B cell (primary cell): ENCODE measurements at regions of chr7 and their contacts with region 1.

Region 1: DNA sequence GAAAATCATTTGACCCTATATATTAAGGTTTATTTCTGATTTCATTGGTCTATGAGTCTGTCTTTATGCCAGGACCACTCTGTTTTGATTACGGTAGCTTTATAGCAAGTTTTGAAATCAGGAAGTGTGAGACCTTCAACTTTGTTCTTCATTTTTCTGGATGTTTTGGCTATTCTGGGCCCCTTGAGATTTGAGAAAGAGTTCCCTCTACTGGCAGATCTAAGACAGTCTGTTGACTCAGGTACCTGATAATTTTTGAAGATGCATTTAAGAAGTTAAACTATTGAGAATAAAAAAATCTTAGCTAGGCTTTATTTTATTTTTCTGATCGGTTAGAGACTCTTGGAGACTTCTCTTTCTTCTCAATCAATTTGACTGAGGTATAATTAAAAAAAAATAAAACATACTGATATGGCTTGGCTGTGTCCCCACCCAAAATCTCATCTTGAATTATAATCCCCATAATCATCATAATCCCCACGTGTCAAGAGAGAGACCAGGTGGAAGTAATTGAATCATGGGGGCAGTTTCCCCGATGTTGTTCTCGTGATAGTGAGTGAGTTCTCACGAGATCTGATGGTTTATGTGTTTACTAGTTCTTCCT is 209.2 kb downstream of the SNX10 start:
- DNase-seq: peak; percentile 70
- ATAC-seq: peak; percentile 70
- H3K4me3 ChIP-seq: no peak overlapping the region
- H3K4me3 Mint-ChIP-seq: no peak overlapping the region
- H3K27ac ChIP-seq: no peak overlapping the region
- H3K27ac Mint-ChIP-seq: no peak overlapping the region
- H3K4me1 ChIP-seq: no peaks in the 10 kb centered on the region
- H3K4me1 Mint-ChIP-seq: no peaks in the 10 kb centered on the region
- H3K27me3 ChIP-seq: peaks cover 0 to 6% (median 3%) of the 10 kb centered on the region in 4 experiments
- H3K27me3 Mint-ChIP-seq: peaks cover 33% of the 10 kb centered on the region
- CTCF ChIP-seq: peak; percentile 73

Region 2: DNA sequence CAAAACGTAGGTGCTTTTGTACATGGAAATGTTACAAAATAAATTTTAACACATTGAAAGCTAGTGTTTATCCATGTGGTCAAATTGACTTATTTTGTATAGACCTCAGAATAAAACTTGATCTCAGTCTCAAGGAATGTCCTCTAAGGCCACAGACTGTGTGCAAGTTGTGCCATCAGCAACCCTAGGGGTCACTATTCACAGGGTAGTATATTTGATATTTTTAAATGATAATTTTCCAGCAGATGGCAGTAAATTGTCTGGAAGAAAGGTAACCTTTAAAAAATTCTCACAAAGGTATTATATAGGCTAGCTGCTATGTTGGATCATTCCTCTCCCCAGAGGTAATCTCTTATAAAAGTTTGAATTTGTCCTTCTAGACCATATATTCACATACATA is 222.1 kb before region 1 on chr7:
- CTCF ChIA-PET with region 1: interaction called, 3 read pairs
- POLR2A ChIA-PET with region 1: no interaction called
- intact Hi-C with region 1: loop called (anchors 2 kb)
- DNase-seq: peak; percentile 66
- ATAC-seq: peak; percentile 64
- H3K4me3 ChIP-seq: no peak overlapping the region
- H3K4me3 Mint-ChIP-seq: no peak overlapping the region
- H3K27ac ChIP-seq: no peak overlapping the region
- H3K27ac Mint-ChIP-seq: no peak overlapping the region
- H3K4me1 ChIP-seq: peaks cover 0 to 3% of the 10 kb centered on the region in 2 donors
- H3K4me1 Mint-ChIP-seq: peaks cover 9% of the 10 kb centered on the region
- H3K27me3 ChIP-seq: no peaks in the 10 kb centered on the region
- H3K27me3 Mint-ChIP-seq: no peaks in the 10 kb centered on the region
- CTCF ChIP-seq: peak; percentile 64

Region 3: GRCh38 chr7:26398756-26399501 is 101.9 kb before region 1 on chr7:
- CTCF ChIA-PET with region 1: interaction called, 14 read pairs
- POLR2A ChIA-PET with region 1: no interaction called
- intact Hi-C with region 1: loop called (anchors 1 kb)
- DNase-seq: peak; percentile 95
- ATAC-seq: peak; percentile 86
- H3K4me3 ChIP-seq: peak overlapping the region in 4 of 5 experiments; percentile 50 to 70 (median 64)
- H3K4me3 Mint-ChIP-seq: peak overlapping the region; percentile 99
- H3K27ac ChIP-seq: peak overlapping the region; percentile 79 to 81
- H3K27ac Mint-ChIP-seq: peak overlapping the region; percentile 100
- H3K4me1 ChIP-seq: peaks cover 20 to 28% of the 10 kb centered on the region in 2 donors
- H3K4me1 Mint-ChIP-seq: peaks cover 32% of the 10 kb centered on the region
- H3K27me3 ChIP-seq: peaks cover 0 to 8% (median 0%) of the 10 kb centered on the region in 4 experiments
- H3K27me3 Mint-ChIP-seq: peaks cover 3% of the 10 kb centered on the region
- CTCF ChIP-seq: no peak

Region 4: GRCh38 chr7:26667500-26668133 is 166.8 kb after region 1 on chr7:
- CTCF ChIA-PET with region 1: no interaction called
- POLR2A ChIA-PET with region 1: no interaction called
- intact Hi-C with region 1: loop called (anchors 2 kb)
- DNase-seq: peak; percentile 75
- ATAC-seq: peak; percentile 66
- H3K4me3 ChIP-seq: no peak overlapping the region
- H3K4me3 Mint-ChIP-seq: no peak overlapping the region
- H3K27ac ChIP-seq: no peak overlapping the region
- H3K27ac Mint-ChIP-seq: no peak overlapping the region
- H3K4me1 ChIP-seq: peaks cover 0 to 6% of the 10 kb centered on the region in 2 donors
- H3K4me1 Mint-ChIP-seq: peaks cover 18% of the 10 kb centered on the region
- H3K27me3 ChIP-seq: no peaks in the 10 kb centered on the region
- H3K27me3 Mint-ChIP-seq: no peaks in the 10 kb centered on the region
- CTCF ChIP-seq: peak; percentile 77